Naive thymus-derived CD4-positive, alpha-beta T cell (primary cell): ENCODE measurements at regions of chr20 and their contacts with region 1.

Region 1: GRCh38 chr20:21615617-21616080 is 89.8 kb upstream of the PAX1 start:
- DNase-seq: peak in 7 of 9 donors; percentile 13 to 38 (median 24)
- ATAC-seq: no peak
- H3K4me3 ChIP-seq: no peak overlapping the region
- H3K4me3 Mint-ChIP-seq: no peak overlapping the region
- H3K27ac ChIP-seq: no peak overlapping the region
- H3K27ac Mint-ChIP-seq: no peak overlapping the region
- H3K4me1 ChIP-seq: no peaks in the 10 kb centered on the region
- H3K4me1 Mint-ChIP-seq: peaks cover 0 to 6% (median 0%) of the 10 kb centered on the region in 7 donors
- H3K27me3 ChIP-seq: no peaks in the 10 kb centered on the region
- H3K27me3 Mint-ChIP-seq: peaks cover 9 to 55% (median 42%) of the 10 kb centered on the region in 5 donors

Region 2: DNA sequence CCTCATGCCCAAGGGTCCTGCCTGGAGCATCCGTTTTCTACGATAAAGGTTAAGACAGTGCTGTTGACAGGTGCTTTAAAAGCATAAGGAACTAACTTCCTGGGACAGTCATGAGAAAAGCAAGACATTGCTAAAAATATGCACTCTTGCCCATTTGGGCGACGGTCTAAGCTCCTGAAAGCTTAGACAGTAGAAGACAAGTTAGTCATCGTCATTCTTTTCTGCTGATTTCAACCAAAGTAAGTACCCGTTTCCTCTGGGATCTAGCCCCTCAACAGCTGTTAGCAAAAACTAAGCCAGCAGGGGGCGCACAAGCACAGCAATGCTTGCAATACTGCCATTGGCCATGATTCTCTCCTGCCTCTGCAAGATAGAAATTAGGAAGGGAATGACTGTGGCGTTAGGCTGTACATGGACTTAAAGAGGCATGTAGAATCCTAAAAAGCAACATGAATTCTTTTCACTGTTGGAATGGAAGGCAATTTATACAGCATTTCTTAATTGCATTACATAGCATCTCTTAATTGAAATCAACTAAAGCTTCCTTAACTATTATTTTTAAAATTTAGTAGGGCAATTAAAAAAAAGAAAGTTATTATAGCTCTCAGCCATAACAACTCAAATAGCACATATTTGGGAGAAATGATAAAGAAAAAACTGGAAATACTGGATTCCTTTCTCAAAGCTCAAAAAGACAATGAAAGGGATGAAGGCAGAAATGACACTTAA is 755.4 kb before region 1 on chr20:
- CTCF ChIA-PET with region 1: no interaction called
- POLR2A ChIA-PET with region 1: no interaction called
- intact Hi-C with region 1: loop called in 1 of 2 experiments (anchors 1 kb)
- DNase-seq: peak; percentile 44 to 80 (median 64)
- ATAC-seq: peak; percentile 81
- H3K4me3 ChIP-seq: no peak overlapping the region
- H3K4me3 Mint-ChIP-seq: no peak overlapping the region
- H3K27ac ChIP-seq: no peak overlapping the region
- H3K27ac Mint-ChIP-seq: no peak overlapping the region
- H3K4me1 ChIP-seq: no peaks in the 10 kb centered on the region
- H3K4me1 Mint-ChIP-seq: peaks cover 0 to 1% (median 0%) of the 10 kb centered on the region in 7 donors
- H3K27me3 ChIP-seq: no peaks in the 10 kb centered on the region
- H3K27me3 Mint-ChIP-seq: peaks cover 13 to 38% (median 31%) of the 10 kb centered on the region in 5 donors

Region 3: GRCh38 chr20:21529863-21530262 is 85.8 kb before region 1 on chr20:
- CTCF ChIA-PET with region 1: interaction called, 3 read pairs
- POLR2A ChIA-PET with region 1: no interaction called
- intact Hi-C with region 1: loop called (anchors 1 to 5 kb)
- DNase-seq: no peak
- ATAC-seq: no peak
- H3K4me3 ChIP-seq: no peak overlapping the region
- H3K4me3 Mint-ChIP-seq: no peak overlapping the region
- H3K27ac ChIP-seq: no peak overlapping the region
- H3K27ac Mint-ChIP-seq: peak overlapping the region in 1 of 9 donors; percentile 3
- H3K4me1 ChIP-seq: no peaks in the 10 kb centered on the region
- H3K4me1 Mint-ChIP-seq: peaks cover 0 to 5% (median 4%) of the 10 kb centered on the region in 7 donors
- H3K27me3 ChIP-seq: no peaks in the 10 kb centered on the region
- H3K27me3 Mint-ChIP-seq: peaks cover 33 to 76% (median 39%) of the 10 kb centered on the region in 5 donors

Region 4: GRCh38 chr20:21656308-21657073 is 40.8 kb after region 1 on chr20:
- CTCF ChIA-PET with region 1: no interaction called
- POLR2A ChIA-PET with region 1: no interaction called
- intact Hi-C with region 1: no loop called
- DNase-seq: no peak
- ATAC-seq: no peak
- H3K4me3 ChIP-seq: no peak overlapping the region
- H3K4me3 Mint-ChIP-seq: no peak overlapping the region
- H3K27ac ChIP-seq: no peak overlapping the region
- H3K27ac Mint-ChIP-seq: no peak overlapping the region
- H3K4me1 ChIP-seq: no peaks in the 10 kb centered on the region
- H3K4me1 Mint-ChIP-seq: peaks cover 0 to 1% (median 0%) of the 10 kb centered on the region in 7 donors
- H3K27me3 ChIP-seq: peaks cover 0 to 5% of the 10 kb centered on the region in 2 donors
- H3K27me3 Mint-ChIP-seq: peaks cover 3 to 28% (median 21%) of the 10 kb centered on the region in 5 donors